ENCODE measurements at regions of chr6 and their contacts with region 1.

Region 1: DNA sequence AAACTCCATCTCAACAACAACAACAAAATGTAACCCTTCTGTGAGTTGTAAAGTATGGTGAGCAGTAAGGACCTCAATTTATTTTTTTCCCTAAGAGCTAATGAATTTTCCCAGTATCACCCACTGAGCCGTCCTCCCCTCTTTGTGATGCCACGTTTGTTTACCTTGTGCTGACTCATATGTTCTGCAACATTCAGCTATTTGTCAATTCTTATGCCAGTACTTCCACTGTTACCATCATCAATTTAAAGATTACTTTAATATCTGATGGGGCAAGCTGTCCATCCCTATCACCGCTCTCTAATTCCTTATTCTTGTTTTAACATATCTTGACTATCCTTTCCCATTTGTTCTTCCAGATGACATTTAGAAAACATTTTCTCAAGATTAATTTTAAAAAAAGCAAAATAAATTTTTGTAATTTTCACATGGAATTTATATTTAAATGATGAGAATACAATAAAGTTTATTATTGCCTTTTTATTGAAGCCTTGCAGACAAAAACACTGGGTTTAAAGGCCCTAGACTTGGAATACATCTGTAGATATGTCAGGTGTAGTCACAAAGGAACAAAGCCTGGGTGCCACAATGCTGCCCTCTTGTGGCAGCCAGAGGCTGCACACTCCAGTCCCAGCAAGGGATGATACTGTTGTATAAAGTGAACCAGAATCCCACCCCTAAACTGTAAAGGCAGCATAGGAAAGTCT is 37.4 kb downstream of the MAK start:
- DNase-seq: peak; percentile 76
- ATAC-seq: peak; percentile 95
- H3K4me3 Mint-ChIP-seq: no peak overlapping the region
- H3K27ac Mint-ChIP-seq: no peak overlapping the region
- H3K4me1 Mint-ChIP-seq: no peaks in the 10 kb centered on the region
- H3K27me3 Mint-ChIP-seq: no peaks in the 10 kb centered on the region

Region 2: GRCh38 chr6:10478187-10479040 is 322.6 kb before region 1 on chr6:
- CTCF ChIA-PET with region 1: interaction called, 59 read pairs
- POLR2A ChIA-PET with region 1: no interaction called
- DNase-seq: no peak
- ATAC-seq: no peak
- H3K4me3 Mint-ChIP-seq: no peak overlapping the region
- H3K27ac Mint-ChIP-seq: no peak overlapping the region
- H3K4me1 Mint-ChIP-seq: peaks cover 2% of the 10 kb centered on the region
- H3K27me3 Mint-ChIP-seq: peaks cover 15% of the 10 kb centered on the region

Region 3: GRCh38 chr6:10510592-10511367 is 290.2 kb before region 1 on chr6:
- CTCF ChIA-PET with region 1: interaction called, 49 read pairs
- POLR2A ChIA-PET with region 1: no interaction called
- DNase-seq: peak; percentile 70
- ATAC-seq: peak; percentile 99
- H3K4me3 Mint-ChIP-seq: no peak overlapping the region
- H3K27ac Mint-ChIP-seq: no peak overlapping the region
- H3K4me1 Mint-ChIP-seq: peaks cover 7% of the 10 kb centered on the region
- H3K27me3 Mint-ChIP-seq: peaks cover 18% of the 10 kb centered on the region

Measured in activated CD8-positive, alpha-beta T cell treated with anti-CD3 and anti-CD28 coated beads, Interleukin-2, amount 10 ng/mL, durations not matched to agents 7 days and 5 days (primary cell).